ENCODE measurements at regions of chr20 and their contacts with region 1.

Region 1: DNA sequence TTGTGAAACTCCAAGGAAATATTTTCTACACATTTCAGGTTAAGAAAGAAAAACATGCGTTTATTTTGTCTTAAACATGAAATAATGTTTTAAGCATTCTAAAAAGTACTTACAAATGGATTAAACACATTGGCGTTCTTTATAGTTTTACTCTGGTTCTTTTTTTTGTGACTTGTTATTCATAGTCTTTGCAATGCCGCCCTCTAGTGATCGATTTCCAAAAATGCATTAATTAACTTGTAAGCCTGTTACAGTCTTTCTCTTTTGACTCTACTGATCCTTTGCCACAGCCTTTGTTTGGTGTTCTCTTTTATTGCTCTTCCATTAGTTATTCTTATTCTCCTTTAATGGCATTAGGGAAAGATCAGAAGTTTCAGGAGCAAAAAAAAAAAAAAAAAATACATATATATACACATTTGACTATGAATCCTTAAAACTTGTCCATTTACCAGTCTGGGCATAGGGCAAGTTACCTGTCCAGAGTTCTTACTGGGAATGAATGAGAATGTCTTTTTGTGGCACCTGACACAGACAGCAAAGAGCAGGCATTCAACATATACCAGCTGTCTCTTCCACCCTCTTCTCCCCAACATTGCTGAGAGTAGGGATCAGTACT is 59.9 kb downstream of the MACROD2 start:
- DNase-seq: peak; percentile 73
- H3K4me3 ChIP-seq: no peak overlapping the region
- H3K27ac ChIP-seq: no peak overlapping the region
- H3K4me1 ChIP-seq: no peaks in the 10 kb centered on the region
- H3K27me3 ChIP-seq: no peaks in the 10 kb centered on the region
- CTCF ChIP-seq: peak; percentile 72

Region 2: DNA sequence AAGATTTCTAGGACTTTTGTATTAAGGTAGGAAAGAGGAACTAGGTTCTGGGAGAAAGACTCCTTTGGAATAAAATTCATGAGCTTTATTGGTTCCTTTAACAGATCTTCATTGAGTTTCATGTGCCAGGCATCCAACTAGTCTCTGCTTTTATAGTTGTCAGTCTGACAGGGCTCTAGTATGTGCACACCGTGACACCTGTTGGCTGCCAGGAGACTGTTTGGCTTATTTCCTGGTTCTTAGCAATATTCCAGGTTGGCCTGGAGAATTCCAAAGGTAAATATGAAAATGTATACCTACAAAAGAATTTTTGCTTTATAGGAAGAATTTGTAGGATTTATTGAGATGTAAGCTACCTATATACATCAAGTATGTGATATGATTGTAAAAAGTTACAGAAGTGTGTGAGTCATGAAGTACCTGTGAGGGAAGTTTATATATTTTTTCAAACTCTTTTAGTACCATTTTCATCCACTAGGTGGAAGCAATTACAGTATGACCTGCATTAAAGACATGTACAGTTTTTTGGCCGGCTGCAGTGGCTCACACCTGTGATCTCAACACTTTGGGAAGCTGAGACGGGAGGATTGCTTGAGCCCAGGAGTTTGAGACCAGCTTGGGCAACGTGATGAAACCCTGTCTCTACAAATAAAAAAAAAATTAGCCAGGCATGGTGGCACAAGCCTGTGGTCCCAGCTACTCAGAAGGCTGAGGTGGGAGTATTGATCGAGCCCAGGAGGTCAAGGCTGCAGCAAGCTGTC is 235.2 kb before region 1 on chr20:
- CTCF ChIA-PET with region 1: interaction called, 3 read pairs
- POLR2A ChIA-PET with region 1: no interaction called
- intact Hi-C with region 1: loop called (anchors 1 kb)
- DNase-seq: peak; percentile 53
- H3K4me3 ChIP-seq: no peak overlapping the region
- H3K27ac ChIP-seq: no peak overlapping the region
- H3K4me1 ChIP-seq: no peaks in the 10 kb centered on the region
- H3K27me3 ChIP-seq: no peaks in the 10 kb centered on the region
- CTCF ChIP-seq: peak; percentile 67

Region 3: GRCh38 chr20:13831476-13831875 is 223.8 kb before region 1 on chr20:
- CTCF ChIA-PET with region 1: no interaction called
- POLR2A ChIA-PET with region 1: no interaction called
- intact Hi-C with region 1: loop called (anchors 2 kb)
- DNase-seq: no peak
- H3K4me3 ChIP-seq: no peak overlapping the region
- H3K27ac ChIP-seq: no peak overlapping the region
- H3K4me1 ChIP-seq: no peaks in the 10 kb centered on the region
- H3K27me3 ChIP-seq: no peaks in the 10 kb centered on the region
- CTCF ChIP-seq: no peak

Region 4: GRCh38 chr20:13898011-13898612 is 157.1 kb before region 1 on chr20:
- CTCF ChIA-PET with region 1: no interaction called
- POLR2A ChIA-PET with region 1: no interaction called
- intact Hi-C with region 1: loop called (anchors 5 kb)
- DNase-seq: no peak
- H3K4me3 ChIP-seq: no peak overlapping the region
- H3K27ac ChIP-seq: no peak overlapping the region
- H3K4me1 ChIP-seq: no peaks in the 10 kb centered on the region
- H3K27me3 ChIP-seq: no peaks in the 10 kb centered on the region
- CTCF ChIP-seq: peak; percentile 34; the same call in 1 of the 2 replicates

Measured in A673 (cell line).